ENCODE measurements at regions of chr22 and their contacts with region 1.

Region 1: GRCh38 chr22:39003165-39003638 is 10.9 kb upstream of the APOBEC3C start:
- DNase-seq: peak; percentile 89
- H3K4me3 Mint-ChIP-seq: no peak overlapping the region
- H3K27ac Mint-ChIP-seq: peak overlapping the region; percentile 6
- H3K4me1 Mint-ChIP-seq: peaks cover 8% of the 10 kb centered on the region
- H3K27me3 Mint-ChIP-seq: no peaks in the 10 kb centered on the region

Region 2: GRCh38 chr22:38766076-38766777 is 237.0 kb before region 1 on chr22:
- CTCF ChIA-PET with region 1: interaction called, 19 read pairs
- POLR2A ChIA-PET with region 1: no interaction called
- intact Hi-C with region 1: no loop called
- DNase-seq: peak; percentile 55
- H3K4me3 Mint-ChIP-seq: no peak overlapping the region
- H3K27ac Mint-ChIP-seq: no peak overlapping the region
- H3K4me1 Mint-ChIP-seq: no peaks in the 10 kb centered on the region
- H3K27me3 Mint-ChIP-seq: no peaks in the 10 kb centered on the region

Region 3: DNA sequence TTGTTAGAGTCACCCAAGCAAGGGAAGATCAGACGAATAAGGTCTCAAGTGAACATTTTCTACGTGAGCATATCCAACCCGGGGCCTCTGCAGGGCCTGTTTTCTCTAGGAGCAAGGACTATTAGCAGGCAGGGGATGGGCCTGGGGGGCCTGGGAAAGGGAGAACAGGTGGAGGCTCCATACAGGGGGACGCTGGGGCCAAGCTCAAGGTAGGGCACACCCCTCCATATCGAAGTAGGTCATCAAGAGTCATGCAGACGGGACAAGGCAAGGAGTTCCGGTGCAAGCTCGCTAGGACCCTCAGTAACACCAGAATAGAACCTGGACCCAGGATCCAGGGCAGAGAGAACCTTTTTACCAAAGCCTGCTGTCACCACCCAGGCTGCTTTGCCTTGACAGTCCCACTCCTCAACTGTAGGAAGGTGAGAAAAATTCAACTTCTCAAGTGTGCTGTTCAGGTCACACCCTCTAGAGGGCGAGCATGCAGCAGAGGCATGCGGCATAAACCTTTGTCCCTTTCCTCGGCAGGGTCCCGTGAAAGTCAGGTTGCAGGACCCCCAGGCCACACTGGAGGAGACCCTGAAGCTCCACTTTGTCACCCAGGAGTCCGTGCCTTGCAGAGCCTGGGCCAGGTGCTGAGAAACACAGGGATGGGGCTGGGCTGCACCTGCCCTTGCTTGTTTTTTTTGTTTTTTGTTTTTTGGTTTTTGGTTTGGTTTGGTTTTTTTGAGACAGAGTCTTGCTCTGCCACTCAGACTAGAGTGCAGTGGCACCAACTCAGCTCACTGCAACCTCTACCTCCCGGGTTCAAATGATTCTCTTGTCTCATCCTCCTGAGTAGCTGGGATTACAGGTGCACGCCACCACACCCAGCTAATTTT is 29.7 kb before region 1 on chr22:
- CTCF ChIA-PET with region 1: interaction called, 51 read pairs
- POLR2A ChIA-PET with region 1: no interaction called
- intact Hi-C with region 1: loop called (anchors 1 kb)
- DNase-seq: peak; percentile 73
- H3K4me3 Mint-ChIP-seq: no peak overlapping the region
- H3K27ac Mint-ChIP-seq: no peak overlapping the region
- H3K4me1 Mint-ChIP-seq: peaks cover 7% of the 10 kb centered on the region
- H3K27me3 Mint-ChIP-seq: peaks cover 7% of the 10 kb centered on the region

Region 4: DNA sequence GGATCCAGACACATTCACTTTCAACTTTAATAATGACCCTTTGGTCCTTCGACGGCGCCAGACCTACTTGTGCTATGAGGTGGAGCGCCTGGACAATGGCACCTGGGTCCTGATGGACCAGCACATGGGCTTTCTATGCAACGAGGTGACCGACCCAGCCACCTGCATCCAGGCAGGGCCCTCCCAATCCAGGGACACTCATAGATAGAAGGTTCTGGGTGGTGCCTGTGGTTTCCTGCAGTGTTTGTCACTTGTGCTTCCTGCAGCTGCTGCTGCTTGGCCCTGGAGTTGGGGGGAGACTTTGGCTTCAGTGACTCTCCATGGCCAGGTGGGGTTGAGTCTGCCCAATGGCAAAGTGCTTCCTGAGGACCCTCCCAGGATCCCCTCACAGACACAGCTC is 13.7 kb before region 1 on chr22:
- CTCF ChIA-PET with region 1: interaction called, 12 read pairs
- POLR2A ChIA-PET with region 1: interaction called, 3 read pairs
- intact Hi-C with region 1: loop called (anchors 1 kb)
- DNase-seq: peak; percentile 64
- H3K4me3 Mint-ChIP-seq: no peak overlapping the region
- H3K27ac Mint-ChIP-seq: no peak overlapping the region
- H3K4me1 Mint-ChIP-seq: peaks cover 61% of the 10 kb centered on the region
- H3K27me3 Mint-ChIP-seq: no peaks in the 10 kb centered on the region

Region 5: DNA sequence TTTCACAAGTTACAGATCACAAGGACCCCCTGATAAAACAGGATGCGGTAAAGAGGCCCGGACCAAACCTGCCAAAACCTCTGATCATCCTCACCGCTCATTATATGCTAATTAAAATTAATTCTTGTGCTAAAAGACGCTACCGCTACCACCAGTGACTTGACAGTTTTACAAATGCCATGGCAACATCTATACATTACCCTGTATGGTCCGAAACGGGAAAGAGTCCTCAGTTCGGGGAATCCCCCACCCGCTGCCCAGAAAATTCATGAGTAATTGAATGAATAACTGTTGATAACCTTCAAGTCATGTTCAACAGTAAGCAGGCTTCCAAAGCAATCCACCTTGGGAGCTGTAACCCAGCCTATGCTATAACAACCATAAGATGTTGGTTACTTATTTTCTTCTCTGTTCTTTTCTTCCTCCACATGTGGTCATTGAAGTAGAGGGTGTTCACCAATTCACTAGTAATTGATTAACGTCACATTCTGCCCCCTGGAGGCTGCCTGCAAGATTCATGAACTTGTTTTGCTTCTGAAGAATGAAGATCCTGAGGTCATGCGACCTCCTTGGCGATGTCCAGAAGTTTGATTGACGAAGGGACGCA is 114.5 kb after region 1 on chr22:
- CTCF ChIA-PET with region 1: interaction called, 15 read pairs
- POLR2A ChIA-PET with region 1: no interaction called
- intact Hi-C with region 1: loop called (anchors 1 kb)
- DNase-seq: peak; percentile 89
- H3K4me3 Mint-ChIP-seq: peak overlapping the region; percentile 11
- H3K27ac Mint-ChIP-seq: peak overlapping the region; percentile 95
- H3K4me1 Mint-ChIP-seq: peaks cover 62% of the 10 kb centered on the region
- H3K27me3 Mint-ChIP-seq: no peaks in the 10 kb centered on the region

Region 6: DNA sequence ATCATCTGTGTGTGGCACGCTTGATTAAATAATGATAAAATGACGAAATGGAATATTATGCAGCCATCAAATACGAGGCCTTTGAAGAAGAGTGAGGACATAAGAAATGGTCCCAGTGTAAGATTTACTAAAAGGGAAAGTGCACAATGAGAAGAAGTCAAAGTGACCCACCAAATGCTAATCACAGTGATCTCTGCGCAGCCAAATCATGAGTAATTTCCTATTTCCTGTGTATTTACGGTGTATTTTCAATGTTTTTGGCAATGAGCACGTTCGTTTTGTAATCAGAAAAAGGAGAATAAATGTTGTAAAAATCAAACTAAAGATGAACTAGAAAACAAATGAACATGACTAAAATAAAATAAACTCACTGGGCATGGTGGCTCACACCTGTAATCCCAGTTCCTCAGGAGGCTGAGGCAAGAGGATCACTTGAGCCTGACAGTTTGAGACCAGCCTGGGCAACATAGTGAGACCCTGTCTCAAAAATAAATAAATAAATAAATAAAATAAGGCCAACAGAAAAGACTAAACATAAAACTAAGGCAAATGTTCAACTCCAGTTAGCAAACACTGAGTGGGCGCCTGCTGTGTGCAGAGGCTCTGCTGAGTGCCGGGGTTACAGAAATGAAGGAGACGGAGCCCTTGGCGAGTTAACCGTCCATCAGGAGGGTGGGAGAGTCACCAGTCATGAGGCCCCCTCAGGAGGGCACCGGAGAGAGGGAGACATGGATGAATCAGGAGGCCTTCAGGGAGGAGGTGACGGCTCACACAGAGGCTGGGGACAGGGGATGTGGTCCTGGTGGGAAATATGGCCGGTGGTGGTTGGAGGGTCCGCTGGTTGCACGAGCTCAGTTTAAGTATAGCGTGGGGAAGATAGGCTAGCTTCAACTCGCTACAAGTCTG is 175.3 kb after region 1 on chr22:
- CTCF ChIA-PET with region 1: no interaction called
- POLR2A ChIA-PET with region 1: no interaction called
- intact Hi-C with region 1: no loop called
- DNase-seq: no peak
- H3K4me3 Mint-ChIP-seq: no peak overlapping the region
- H3K27ac Mint-ChIP-seq: no peak overlapping the region
- H3K4me1 Mint-ChIP-seq: peaks cover 36% of the 10 kb centered on the region
- H3K27me3 Mint-ChIP-seq: no peaks in the 10 kb centered on the region

Measured in activated CD4-positive, alpha-beta memory T cell treated with anti-CD3 and anti-CD28 coated beads for 36 hours (primary cell).